ENCODE measurements at regions of chr2 and their contacts with region 1.

Region 1: GRCh38 chr2:202265467-202266277 is at the start of gene NOP58:
- H3K4me3 Mint-ChIP-seq: peak within 1 kb of the TSS; percentile 55
- H3K27ac Mint-ChIP-seq: no peak within 1 kb of the TSS
- H3K4me1 Mint-ChIP-seq: peaks cover 11% of the 10 kb centered on the region
- H3K27me3 Mint-ChIP-seq: no peaks in the 10 kb centered on the region

Region 2: GRCh38 chr2:202238234-202239197 is 27.2 kb before region 1 on chr2 and contains the start of gene SUMO1:
- intact Hi-C with region 1: loop called (anchors 2 kb)
- H3K4me3 Mint-ChIP-seq: peak within 1 kb of the TSS; percentile 94
- H3K27ac Mint-ChIP-seq: peak within 1 kb of the TSS; percentile 92
- H3K4me1 Mint-ChIP-seq: peaks cover 18% of the 10 kb centered on the region
- H3K27me3 Mint-ChIP-seq: no peaks in the 10 kb centered on the region

Region 3: DNA sequence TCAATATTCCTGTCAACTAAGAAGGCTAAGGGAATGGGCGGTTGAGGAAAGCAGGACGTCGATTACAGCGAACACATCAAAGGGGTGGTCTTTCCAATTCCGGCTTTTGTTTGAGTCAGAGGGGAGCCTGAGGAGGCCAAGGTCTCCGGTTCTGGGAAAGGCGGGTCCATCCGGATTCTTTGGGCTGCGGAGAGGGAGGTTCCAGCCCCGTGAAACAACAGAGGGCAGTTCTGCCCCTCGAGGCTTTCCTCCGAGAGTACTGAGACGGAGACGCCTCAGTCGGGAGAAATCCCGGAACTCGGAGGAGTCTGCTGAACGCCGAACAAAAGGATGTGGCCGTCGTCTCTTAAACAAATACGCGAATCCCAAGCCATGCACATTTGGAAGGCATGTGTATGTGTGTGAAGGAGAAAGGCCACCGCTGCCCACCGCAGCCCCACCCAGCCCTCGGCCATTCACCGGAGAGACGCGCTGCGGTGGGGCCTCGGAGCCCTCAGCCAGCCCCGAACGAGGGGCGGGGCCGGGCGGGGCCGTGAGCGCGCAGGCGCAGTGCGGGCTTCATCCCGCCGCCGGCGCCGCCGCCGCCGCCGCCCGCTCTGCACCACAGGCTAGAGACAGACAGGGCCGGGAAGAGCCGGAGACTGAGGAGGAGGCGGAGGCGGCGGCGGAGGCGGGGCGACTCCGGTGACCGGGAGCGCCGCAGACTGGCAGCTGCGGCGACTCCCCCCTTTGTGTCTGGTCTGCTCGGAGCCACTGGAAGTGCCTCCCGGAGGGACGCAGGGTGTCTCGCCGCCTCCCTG is 110.1 kb after region 1 on chr2 and contains the start of gene BMPR2:
- intact Hi-C with region 1: loop called (anchors 5 kb)
- H3K4me3 Mint-ChIP-seq: peak within 1 kb of the TSS; percentile 88
- H3K27ac Mint-ChIP-seq: peak within 1 kb of the TSS; percentile 94
- H3K4me1 Mint-ChIP-seq: peaks cover 19% of the 10 kb centered on the region
- H3K27me3 Mint-ChIP-seq: peaks cover 9% of the 10 kb centered on the region

Region 4: GRCh38 chr2:203237346-203238238 is 971.9 kb after region 1 on chr2:
- intact Hi-C with region 1: no loop called
- H3K4me3 Mint-ChIP-seq: peak overlapping the region; percentile 85
- H3K27ac Mint-ChIP-seq: peak overlapping the region; percentile 85
- H3K4me1 Mint-ChIP-seq: peaks cover 16% of the 10 kb centered on the region
- H3K27me3 Mint-ChIP-seq: no peaks in the 10 kb centered on the region

Region 5: GRCh38 chr2:203280428-203281064 is 1014.9 kb after region 1 on chr2:
- intact Hi-C with region 1: no loop called
- H3K4me3 Mint-ChIP-seq: no peak overlapping the region
- H3K27ac Mint-ChIP-seq: no peak overlapping the region
- H3K4me1 Mint-ChIP-seq: no peaks in the 10 kb centered on the region
- H3K27me3 Mint-ChIP-seq: no peaks in the 10 kb centered on the region

Measured in dendritic cell treated with granulocyte-macrophage colony-stimulating factor and Interleukin-4, amounts not matched to agents 40 ng/mL and 50 ng/mL, for 4 days (primary cell).